AG04449 (cell line): ENCODE measurements at regions of chr22 and their contacts with region 1.

Region 1: GRCh38 chr22:31211862-31212730 is at the start of gene LIMK2:
- DNase-seq: no peak
- H3K4me3 ChIP-seq: peak within 1 kb of the TSS; percentile 79
- CTCF ChIP-seq: peak; percentile 95

Region 2: DNA sequence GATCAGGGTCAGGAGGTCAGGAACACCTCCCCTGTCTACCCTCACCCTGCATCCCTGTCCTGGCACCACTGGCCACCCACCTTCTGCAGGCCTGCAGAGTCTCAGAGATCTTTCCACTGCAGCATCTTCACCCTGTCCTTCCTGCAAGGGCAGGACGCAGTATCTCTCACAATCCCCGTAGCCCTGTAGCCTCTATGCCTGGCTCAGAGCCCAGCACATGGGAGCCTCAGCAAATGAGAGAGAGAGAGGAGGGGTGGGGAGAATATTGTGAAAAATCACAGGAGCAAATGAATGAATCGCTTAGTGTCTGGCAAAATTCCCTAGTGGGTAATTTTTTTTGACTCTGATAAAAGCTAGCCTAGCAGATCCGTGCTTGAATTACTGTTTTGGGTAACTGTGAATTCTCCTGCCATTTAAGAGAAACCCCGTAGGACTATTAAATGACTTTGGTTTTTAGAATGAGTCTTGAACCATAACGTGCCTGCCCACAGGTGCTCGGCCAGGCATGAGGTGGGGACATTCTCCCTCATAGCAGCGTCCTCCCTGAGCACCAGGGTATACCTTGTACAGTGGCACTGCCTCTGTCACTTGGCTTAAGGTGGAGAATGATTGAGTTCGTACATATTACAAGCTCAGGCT is 335.1 kb before region 1 on chr22:
- CTCF ChIA-PET with region 1: no interaction called
- POLR2A ChIA-PET with region 1: no interaction called
- DNase-seq: no peak
- H3K4me3 ChIP-seq: no peak overlapping the region
- CTCF ChIP-seq: no peak

Region 3: DNA sequence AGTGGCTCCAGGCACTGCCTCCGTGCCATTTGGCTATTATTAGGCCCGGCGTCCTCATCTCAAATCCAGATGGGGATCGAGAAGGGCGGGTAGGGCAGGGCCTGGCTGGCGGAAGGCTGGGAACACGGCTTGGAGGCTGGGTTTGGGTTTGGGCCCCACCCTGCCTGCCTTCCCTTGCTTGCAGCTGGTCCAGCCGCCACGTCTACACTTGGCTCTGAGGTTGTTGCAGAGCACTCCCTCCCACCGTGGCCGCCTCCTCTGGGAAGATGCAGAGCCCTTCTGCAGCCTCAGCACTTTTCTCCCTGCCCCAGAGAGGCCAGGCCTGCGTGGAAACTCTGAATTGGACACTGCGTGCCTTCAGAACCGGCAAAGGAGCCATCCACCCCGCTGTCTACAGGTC is 136.1 kb before region 1 on chr22:
- CTCF ChIA-PET with region 1: no interaction called
- POLR2A ChIA-PET with region 1: no interaction called
- DNase-seq: no peak
- H3K4me3 ChIP-seq: no peak overlapping the region
- CTCF ChIP-seq: no peak

Region 4: DNA sequence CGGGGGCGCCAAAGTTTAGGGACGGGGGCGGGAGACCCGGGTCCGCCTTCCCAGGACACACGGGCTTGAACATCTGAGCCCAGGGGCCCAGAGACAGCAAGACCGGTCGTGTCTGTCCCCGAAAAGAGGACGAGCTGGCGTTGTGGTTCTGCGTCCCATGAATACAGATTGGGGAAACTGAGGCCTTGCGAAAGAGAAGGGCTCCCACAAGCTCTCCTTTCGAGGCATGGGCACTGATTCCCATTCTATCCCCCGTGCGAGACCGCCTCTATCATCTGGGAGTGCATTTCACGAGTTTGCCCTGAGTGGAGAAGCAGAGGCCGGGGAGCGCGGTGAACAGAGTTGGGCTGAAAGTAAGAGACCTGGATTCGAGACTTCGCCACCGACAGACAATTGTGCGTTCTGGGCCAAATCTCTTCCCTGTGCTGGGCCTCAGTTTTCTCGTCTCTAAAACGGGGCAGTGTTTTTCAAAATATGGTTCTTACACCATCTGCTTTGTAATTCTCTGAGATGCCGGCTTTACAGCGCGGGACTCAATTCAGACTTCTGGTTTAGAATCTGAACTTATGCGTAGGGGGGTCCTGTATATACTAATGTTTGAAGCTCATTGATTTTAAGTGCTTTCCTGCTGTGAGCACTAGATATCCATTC is 51.6 kb before region 1 on chr22:
- CTCF ChIA-PET with region 1: interaction called, 26 read pairs
- POLR2A ChIA-PET with region 1: interaction called, 3 read pairs
- DNase-seq: no peak
- H3K4me3 ChIP-seq: peak overlapping the region; percentile 93
- CTCF ChIP-seq: no peak

Region 5: DNA sequence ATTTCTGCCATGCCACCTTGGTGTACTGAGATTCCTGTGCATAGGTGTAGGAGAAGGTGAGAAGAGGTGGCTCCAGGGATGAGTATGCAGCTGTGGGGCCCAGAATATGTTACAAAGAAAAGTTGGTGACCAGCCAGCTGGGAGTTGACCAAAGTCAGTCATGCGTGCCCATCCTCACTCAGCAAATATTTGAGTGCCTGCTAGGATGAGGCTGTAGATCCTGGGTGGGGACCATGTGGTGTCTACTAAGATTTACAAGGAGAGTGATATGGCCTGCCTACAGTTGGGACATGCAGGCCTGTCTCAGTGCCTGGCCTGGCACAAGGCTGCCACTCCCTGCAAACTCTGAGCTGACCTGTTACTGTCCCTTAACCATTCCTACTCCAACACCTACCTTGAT is 32.7 kb before region 1 on chr22:
- CTCF ChIA-PET with region 1: interaction called, 26 read pairs
- POLR2A ChIA-PET with region 1: no interaction called
- DNase-seq: no peak
- H3K4me3 ChIP-seq: no peak overlapping the region
- CTCF ChIP-seq: no peak

Region 6: DNA sequence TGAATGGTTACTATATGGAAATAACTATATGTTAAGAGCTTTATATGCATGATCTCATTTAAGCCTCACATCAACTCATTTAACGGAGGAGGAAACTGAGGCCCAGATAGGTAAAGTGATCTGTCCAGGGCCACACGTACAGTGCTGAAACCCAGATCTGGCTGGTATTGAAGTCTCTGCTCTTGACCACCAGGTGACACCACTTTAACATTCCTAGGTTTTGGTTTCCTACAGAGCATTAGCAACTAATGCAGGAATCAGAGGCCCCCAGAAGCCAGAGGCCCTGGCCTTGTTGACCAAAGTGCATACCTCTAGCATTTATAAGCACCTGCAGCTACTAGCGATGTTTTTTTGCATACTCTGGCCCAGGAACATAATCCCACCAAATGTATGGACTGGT is 12.9 kb before region 1 on chr22:
- CTCF ChIA-PET with region 1: interaction called, 92 read pairs
- POLR2A ChIA-PET with region 1: no interaction called
- DNase-seq: no peak
- H3K4me3 ChIP-seq: no peak overlapping the region
- CTCF ChIP-seq: no peak

Region 7: DNA sequence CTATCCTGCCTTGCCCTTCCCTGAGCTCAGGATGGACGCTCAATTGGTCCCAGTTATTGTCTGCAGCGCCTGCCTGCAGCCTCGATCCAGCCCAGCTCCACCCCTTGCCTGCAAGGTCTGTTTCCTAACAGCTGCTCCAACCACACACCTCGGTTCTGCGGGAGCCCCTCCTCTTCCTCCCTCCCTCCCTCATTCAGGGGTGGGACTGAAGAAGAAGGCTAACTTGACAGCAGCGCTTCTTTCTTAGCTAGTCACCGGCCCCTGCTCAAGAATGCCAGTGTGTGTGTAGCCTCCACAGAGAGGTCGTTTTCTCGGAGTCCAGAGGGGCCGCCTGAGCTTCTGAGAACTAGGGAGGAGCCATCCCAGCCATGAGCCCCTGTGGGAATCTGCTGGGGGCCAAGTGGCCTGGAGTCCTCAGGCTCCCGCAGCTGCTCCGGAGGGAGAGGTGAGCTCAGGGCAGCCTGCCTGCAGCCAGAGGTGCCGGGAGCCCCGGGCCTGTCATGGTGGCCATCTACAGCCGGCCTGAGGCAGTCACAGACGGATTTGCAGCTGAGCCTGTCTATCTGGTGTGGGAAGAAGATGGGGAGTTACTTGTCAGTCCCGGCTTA is 36.1 kb after region 1 on chr22:
- CTCF ChIA-PET with region 1: interaction called, 91 read pairs
- POLR2A ChIA-PET with region 1: no interaction called
- DNase-seq: peak; percentile 74
- H3K4me3 ChIP-seq: peak overlapping the region; percentile 72
- CTCF ChIP-seq: no peak

Region 8: GRCh38 chr22:31272522-31273446 is 60.7 kb after region 1 on chr22:
- CTCF ChIA-PET with region 1: interaction called, 170 read pairs
- POLR2A ChIA-PET with region 1: no interaction called
- DNase-seq: no peak
- H3K4me3 ChIP-seq: no peak overlapping the region
- CTCF ChIP-seq: peak; percentile 74